Endothelial cell of umbilical vein (primary cell): ENCODE measurements at regions of chr12 and their contacts with region 1.

Region 1: GRCh38 chr12:80195074-80195726 is 95.9 kb downstream of the OTOGL start:
- DNase-seq: peak; percentile 79
- H3K4me3 ChIP-seq: no peak overlapping the region
- H3K27ac ChIP-seq: no peak overlapping the region
- H3K4me1 ChIP-seq: no peaks in the 10 kb centered on the region
- H3K27me3 ChIP-seq: no peaks in the 10 kb centered on the region
- CTCF ChIP-seq: peak; percentile 70 to 74
- POLR2A ChIP-seq: no peak

Region 2: DNA sequence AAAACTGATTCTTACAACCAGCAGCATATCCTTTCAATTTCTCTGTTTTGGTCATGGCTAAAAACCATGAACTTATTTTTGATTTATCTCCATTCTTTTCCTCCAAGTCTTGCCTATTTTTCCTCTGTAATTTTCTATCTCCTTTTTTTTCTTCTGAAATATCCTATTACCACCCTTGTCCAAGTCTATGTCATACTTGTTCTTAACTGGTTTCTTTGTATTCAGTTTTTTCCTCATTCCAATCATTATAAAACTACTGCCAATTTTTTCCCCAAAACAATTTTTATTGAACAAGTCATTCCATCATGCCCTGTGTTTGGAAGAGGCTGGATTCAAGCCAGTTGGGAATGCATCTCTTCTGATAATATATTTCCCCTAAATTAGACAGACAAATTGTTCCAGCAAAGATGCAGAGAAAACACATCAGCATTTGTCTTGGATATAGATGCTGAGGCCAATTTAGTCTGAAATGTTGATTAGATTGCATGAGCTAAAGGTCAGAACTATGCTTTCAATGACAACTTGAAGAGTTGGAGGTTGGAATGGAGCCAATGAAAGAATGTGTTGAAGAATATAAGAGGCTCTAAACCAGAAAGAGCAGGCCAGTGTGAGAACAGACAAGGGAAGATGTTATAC is 65.2 kb before region 1 on chr12:
- CTCF ChIA-PET with region 1: no interaction called
- POLR2A ChIA-PET with region 1: no interaction called
- dilution Hi-C with region 1: no loop called
- intact Hi-C with region 1: no loop called
- DNase-seq: no peak
- H3K4me3 ChIP-seq: no peak overlapping the region
- H3K27ac ChIP-seq: no peak overlapping the region
- H3K4me1 ChIP-seq: no peaks in the 10 kb centered on the region
- H3K27me3 ChIP-seq: no peaks in the 10 kb centered on the region
- CTCF ChIP-seq: no peak
- POLR2A ChIP-seq: no peak

Region 3: DNA sequence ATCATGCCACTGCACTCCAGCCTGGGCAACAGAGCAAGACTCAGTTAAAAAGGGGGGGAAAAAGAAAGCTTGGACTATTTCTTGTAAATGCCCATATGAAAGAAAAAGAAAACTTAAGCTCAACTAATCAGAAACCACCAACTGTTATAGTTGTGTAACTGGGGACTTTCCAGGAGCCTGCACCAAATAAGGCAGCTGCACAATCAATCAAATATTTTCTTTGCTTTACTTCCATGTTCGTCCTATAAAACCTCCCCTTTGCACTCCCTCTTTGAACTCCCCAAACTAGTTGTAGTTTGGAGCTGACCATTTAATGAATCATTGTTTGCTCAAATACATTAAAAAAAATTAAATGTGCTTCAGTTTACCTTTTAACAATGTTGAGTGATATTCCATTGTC is 40.9 kb before region 1 on chr12:
- CTCF ChIA-PET with region 1: no interaction called
- POLR2A ChIA-PET with region 1: no interaction called
- dilution Hi-C with region 1: no loop called
- intact Hi-C with region 1: no loop called
- DNase-seq: no peak
- H3K4me3 ChIP-seq: no peak overlapping the region
- H3K27ac ChIP-seq: no peak overlapping the region
- H3K4me1 ChIP-seq: no peaks in the 10 kb centered on the region
- H3K27me3 ChIP-seq: peaks cover 0 to 2% of the 10 kb centered on the region in 2 experiments
- CTCF ChIP-seq: no peak
- POLR2A ChIP-seq: no peak

Region 4: GRCh38 chr12:80222261-80222660 is 27.1 kb after region 1 on chr12:
- CTCF ChIA-PET with region 1: interaction called, 16 read pairs
- POLR2A ChIA-PET with region 1: interaction called, 3 read pairs
- dilution Hi-C with region 1: no loop called
- intact Hi-C with region 1: loop called (anchors 2 kb)
- DNase-seq: peak; percentile 90
- H3K4me3 ChIP-seq: peak overlapping the region in 1 of 3 experiments; percentile 26
- H3K27ac ChIP-seq: peak overlapping the region; percentile 94
- H3K4me1 ChIP-seq: peaks cover 40% of the 10 kb centered on the region
- H3K27me3 ChIP-seq: no peaks in the 10 kb centered on the region
- CTCF ChIP-seq: no peak
- POLR2A ChIP-seq: peak; percentile 21

Region 5: DNA sequence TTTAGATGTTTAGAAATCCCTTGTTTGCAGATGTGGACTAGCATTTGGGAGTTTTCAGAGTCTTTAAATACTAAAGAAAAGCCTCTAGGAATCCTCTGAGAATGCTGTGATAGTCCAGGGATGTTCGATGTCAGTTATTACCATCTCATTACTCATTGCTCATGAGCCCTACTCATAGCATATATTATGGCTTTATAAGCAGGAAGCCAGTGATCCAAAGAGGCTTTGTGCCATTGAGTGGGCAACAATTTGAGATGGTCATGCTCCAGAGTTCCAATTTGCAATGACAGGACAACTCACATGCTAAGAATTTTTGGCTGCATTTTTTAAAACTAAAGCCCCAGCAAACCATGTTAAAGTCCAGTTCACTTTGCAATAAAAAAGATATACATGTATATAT is 67.1 kb after region 1 on chr12:
- CTCF ChIA-PET with region 1: interaction called, 67 read pairs
- POLR2A ChIA-PET with region 1: no interaction called
- dilution Hi-C with region 1: no loop called
- intact Hi-C with region 1: no loop called
- DNase-seq: no peak
- H3K4me3 ChIP-seq: no peak overlapping the region
- H3K27ac ChIP-seq: no peak overlapping the region
- H3K4me1 ChIP-seq: no peaks in the 10 kb centered on the region
- H3K27me3 ChIP-seq: no peaks in the 10 kb centered on the region
- CTCF ChIP-seq: no peak
- POLR2A ChIP-seq: no peak

Region 6: GRCh38 chr12:80353257-80353656 is 158.1 kb after region 1 on chr12:
- CTCF ChIA-PET with region 1: interaction called, 3 read pairs
- POLR2A ChIA-PET with region 1: no interaction called
- dilution Hi-C with region 1: no loop called
- intact Hi-C with region 1: loop called (anchors 5 kb)
- DNase-seq: peak; percentile 49
- H3K4me3 ChIP-seq: no peak overlapping the region
- H3K27ac ChIP-seq: peak overlapping the region; percentile 58
- H3K4me1 ChIP-seq: peaks cover 51% of the 10 kb centered on the region
- H3K27me3 ChIP-seq: no peaks in the 10 kb centered on the region
- CTCF ChIP-seq: no peak
- POLR2A ChIP-seq: no peak

Region 7: DNA sequence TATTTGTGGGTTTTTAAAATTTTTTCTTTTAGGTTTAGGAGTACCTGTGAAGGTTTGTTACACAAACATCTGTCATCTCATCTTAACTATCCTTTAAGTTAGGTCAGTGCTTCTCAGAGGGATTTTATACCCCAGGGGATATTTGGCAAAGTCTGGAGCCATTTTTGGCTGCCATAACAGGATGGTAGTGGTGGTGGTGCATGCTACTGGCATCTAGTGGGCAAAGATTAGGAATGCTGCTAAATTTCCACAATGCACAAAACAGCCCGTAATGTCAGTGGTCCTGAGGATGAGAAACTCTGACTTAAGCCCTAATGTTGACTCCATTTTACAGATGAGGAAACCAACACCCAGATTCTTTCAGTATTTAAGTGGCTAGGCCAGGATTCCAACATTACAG is 427.1 kb after region 1 on chr12:
- CTCF ChIA-PET with region 1: interaction called, 7 read pairs
- POLR2A ChIA-PET with region 1: no interaction called
- dilution Hi-C with region 1: no loop called
- intact Hi-C with region 1: loop called (anchors 10 kb)
- DNase-seq: no peak
- H3K4me3 ChIP-seq: no peak overlapping the region
- H3K27ac ChIP-seq: no peak overlapping the region
- H3K4me1 ChIP-seq: no peaks in the 10 kb centered on the region
- H3K27me3 ChIP-seq: no peaks in the 10 kb centered on the region
- CTCF ChIP-seq: peak; percentile 17 to 18
- POLR2A ChIP-seq: no peak